HepG2 (cell line): ENCODE measurements at regions of chr1 and their contacts with region 1.

Region 1: GRCh38 chr1:214213136-214213535 is 67.8 kb upstream of the SMYD2 start:
- DNase-seq: no peak
- ATAC-seq: no peak
- H3K4me3 ChIP-seq: no peak overlapping the region
- H3K27ac ChIP-seq: no peak overlapping the region
- H3K4me1 ChIP-seq: peaks cover 20% of the 10 kb centered on the region
- H3K27me3 ChIP-seq: peaks cover 0 to 10% of the 10 kb centered on the region in 2 experiments; a peak in 2 of 5 replicates
- CTCF ChIP-seq: no peak
- EP300 ChIP-seq: no peak
- POLR2A ChIP-seq: no peak
- RAD21 ChIP-seq: no peak

Region 2: DNA sequence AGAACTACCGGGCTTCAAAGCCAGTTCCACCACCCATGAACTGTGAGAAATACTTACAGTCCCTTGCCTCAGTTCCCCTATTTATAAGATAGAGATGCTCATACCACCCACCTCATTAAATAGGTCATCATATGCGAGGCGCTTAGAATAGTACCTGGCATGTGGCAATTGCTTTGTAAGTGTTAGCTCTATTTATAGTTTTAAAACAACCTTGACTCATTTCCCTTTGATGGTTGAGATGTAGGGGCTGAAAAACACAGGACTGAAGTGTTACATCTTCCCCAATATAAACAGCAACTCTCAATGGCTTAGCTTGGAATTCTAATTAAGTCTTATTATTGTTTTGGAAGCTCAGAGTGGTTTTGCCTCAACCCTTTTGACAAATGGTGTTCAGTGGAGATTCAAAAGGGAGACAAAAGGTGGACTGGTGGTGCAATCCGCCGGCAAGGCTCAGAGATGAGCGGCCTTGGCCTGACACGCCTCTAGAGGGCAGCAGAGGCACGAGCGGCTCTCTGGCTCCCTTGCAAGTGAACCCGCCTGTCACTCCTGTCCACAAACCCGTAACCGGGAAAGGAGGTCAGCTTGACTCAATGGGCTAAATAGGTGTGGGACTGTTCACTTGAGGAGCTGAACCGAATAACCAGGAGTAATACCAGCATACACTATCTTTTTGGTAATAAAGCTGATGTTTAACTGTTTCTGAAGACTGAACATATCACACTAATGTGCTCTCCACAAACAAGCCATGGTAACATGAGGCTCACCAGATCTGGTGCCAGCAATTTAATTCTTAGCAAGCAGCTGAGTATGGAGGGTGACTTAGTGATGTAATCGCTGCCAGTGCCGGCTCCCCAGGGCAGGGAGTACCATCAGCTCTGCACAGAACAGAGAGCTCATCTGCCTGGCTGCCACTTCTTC is 48.3 kb after region 1 on chr1:
- CTCF ChIA-PET with region 1: no interaction called
- POLR2A ChIA-PET with region 1: no interaction called
- in situ Hi-C with region 1: no loop called
- intact Hi-C with region 1: loop called (anchors 2 kb)
- DNase-seq: peak; percentile 52
- ATAC-seq: peak; percentile 99
- H3K4me3 ChIP-seq: no peak overlapping the region
- H3K27ac ChIP-seq: no peak overlapping the region
- H3K4me1 ChIP-seq: peaks cover 18% of the 10 kb centered on the region; the same call in 1 of the 2 replicates
- H3K27me3 ChIP-seq: peaks cover 0 to 14% of the 10 kb centered on the region in 2 experiments; a peak in 2 of 5 replicates
- CTCF ChIP-seq: peak; percentile 98
- EP300 ChIP-seq: no peak
- POLR2A ChIP-seq: no peak
- RAD21 ChIP-seq: peak; percentile 93

Region 3: GRCh38 chr1:214328770-214329469 is 115.8 kb after region 1 on chr1:
- CTCF ChIA-PET with region 1: interaction called, 17 read pairs
- POLR2A ChIA-PET with region 1: no interaction called
- in situ Hi-C with region 1: loop called (anchors 5 kb)
- intact Hi-C with region 1: loop called (anchors 1 kb)
- DNase-seq: peak; percentile 65
- ATAC-seq: peak; percentile 91
- H3K4me3 ChIP-seq: no peak overlapping the region
- H3K27ac ChIP-seq: no peak overlapping the region
- H3K4me1 ChIP-seq: no peaks in the 10 kb centered on the region
- H3K27me3 ChIP-seq: no peaks in the 10 kb centered on the region
- CTCF ChIP-seq: peak; percentile 95
- EP300 ChIP-seq: no peak
- POLR2A ChIP-seq: no peak
- RAD21 ChIP-seq: peak; percentile 96

Region 4: GRCh38 chr1:214637722-214638458 is 424.8 kb after region 1 on chr1:
- CTCF ChIA-PET with region 1: interaction called, 8 read pairs
- POLR2A ChIA-PET with region 1: no interaction called
- in situ Hi-C with region 1: no loop called
- intact Hi-C with region 1: loop called (anchors 2 kb)
- DNase-seq: peak; percentile 15
- ATAC-seq: peak; percentile 54; the same call in 2 of the 3 replicates
- H3K4me3 ChIP-seq: no peak overlapping the region
- H3K27ac ChIP-seq: no peak overlapping the region
- H3K4me1 ChIP-seq: no peaks in the 10 kb centered on the region
- H3K27me3 ChIP-seq: no peaks in the 10 kb centered on the region
- CTCF ChIP-seq: peak; percentile 43
- EP300 ChIP-seq: no peak
- POLR2A ChIP-seq: no peak
- RAD21 ChIP-seq: no peak